ENCODE measurements at regions of chr4 and their contacts with region 1.

Region 1: DNA sequence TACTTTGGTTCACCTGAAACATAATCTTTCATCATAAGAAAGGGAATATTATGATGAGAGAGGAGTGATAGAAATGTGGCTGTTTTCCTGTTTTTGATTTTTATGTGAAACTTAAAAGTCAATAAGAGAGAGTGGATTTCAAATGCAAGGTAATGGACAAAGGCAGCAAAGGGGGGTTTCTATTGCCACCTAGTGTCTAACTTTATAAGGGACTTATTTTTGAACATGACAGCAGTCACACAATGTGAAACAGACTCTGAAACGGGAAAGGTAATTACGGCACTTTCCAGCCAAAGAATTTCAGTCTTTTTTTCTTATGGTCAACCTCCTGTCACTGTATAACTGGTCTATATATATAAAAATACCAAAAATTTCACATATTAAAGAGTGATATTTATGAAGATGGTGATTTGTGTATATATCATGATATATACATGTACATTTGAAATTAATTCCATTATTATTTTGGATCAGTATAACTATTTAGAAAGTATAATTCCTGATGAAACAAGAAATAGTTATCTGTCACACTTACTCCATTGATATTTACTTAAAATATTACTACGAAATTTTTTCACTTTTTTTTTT is 127.1 kb downstream of the FBXO8 start:
- DNase-seq: no peak

Region 2: DNA sequence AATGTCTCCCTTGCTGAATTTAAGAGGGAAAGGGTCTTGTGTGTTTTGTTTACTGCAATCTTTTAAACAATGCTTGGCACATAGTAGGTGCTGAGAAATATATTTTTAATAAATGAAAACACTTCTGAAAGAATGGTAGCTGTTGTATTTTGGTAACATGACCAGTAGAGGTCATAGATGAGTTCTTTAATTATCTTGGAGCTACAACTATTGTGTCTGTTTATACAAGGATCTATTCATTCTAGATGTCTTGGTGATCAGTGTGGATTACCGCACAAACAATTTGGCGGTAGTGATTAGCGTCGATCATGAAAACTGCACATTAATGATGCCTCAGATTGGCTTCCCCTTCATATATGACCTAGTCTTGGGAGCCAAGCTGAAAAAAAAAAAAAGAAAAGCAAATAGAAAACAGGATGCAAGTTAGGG is 736.0 kb before region 1 on chr4:
- intact Hi-C with region 1: loop called (anchors 10 kb)
- DNase-seq: no peak

Region 3: DNA sequence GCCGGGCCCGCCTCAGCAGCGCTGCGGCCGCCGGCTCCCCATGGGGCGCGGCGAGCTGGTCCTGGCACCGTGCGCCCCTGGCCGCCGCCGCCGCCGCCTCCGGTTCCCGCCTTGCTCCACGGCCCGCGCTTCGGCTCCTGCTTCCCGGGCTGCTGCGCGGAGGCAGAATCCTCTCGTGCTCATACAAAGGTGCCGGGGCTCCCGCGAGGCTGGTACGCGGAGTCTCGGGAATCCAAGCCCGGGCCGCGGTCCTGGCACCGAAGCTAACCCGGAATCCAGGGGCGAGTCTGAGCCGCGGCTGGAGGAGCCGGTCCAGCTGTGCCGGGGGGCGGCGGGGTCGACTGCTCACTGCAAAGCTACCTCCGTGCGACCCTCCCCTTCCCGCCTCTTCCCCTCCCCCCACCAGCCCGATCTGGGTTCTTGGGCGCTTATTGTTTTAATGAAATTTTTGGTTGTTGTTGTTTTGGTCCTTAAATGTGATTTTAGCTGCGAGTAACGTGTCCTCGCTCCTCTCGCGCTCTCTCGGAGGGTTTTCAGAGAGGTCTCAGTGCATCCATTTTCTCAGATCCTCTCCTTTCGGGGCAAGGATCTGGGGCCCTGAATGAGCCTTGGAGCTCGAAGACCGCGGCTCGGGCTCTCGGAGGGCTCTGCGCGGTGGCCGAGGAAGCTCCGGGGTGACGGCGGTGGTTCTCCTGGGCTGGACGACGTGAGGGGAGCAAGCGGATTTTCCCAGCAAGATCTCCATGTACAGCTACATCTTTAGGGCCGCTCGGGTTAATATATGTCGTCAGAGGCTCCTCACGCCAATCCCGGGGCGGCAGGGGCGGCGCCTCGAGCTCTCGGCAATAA is 626.6 kb before region 1 on chr4 and contains the start of gene HAND2:
- intact Hi-C with region 1: loop called (anchors 10 kb)
- DNase-seq: peak; percentile 90
- total RNA-seq, gene HAND2: 161 TPM

Region 4: DNA sequence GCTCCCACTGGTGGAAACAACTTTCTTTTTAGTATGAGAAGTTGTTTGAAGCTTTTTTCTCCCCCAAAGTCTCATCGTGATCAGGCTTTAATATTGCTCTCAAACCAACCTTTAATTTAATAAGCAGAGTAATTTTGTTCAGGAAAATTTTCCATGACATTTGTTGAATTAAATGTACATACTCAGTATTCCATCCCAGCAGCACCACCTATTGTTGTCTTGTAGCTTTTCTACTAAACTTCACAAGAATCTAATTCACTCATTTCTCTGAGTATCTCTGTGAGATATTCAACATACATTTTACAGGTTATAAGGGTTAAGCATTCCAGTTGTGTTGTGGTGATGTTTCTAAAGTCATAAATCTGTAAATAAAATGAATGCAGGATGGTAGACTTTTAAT is 408.0 kb before region 1 on chr4:
- intact Hi-C with region 1: loop called (anchors 5 kb)
- DNase-seq: no peak

Region 5: GRCh38 chr4:173990126-173990868 is 166.0 kb before region 1 on chr4:
- intact Hi-C with region 1: loop called (anchors 5 kb)
- DNase-seq: no peak

Region 6: DNA sequence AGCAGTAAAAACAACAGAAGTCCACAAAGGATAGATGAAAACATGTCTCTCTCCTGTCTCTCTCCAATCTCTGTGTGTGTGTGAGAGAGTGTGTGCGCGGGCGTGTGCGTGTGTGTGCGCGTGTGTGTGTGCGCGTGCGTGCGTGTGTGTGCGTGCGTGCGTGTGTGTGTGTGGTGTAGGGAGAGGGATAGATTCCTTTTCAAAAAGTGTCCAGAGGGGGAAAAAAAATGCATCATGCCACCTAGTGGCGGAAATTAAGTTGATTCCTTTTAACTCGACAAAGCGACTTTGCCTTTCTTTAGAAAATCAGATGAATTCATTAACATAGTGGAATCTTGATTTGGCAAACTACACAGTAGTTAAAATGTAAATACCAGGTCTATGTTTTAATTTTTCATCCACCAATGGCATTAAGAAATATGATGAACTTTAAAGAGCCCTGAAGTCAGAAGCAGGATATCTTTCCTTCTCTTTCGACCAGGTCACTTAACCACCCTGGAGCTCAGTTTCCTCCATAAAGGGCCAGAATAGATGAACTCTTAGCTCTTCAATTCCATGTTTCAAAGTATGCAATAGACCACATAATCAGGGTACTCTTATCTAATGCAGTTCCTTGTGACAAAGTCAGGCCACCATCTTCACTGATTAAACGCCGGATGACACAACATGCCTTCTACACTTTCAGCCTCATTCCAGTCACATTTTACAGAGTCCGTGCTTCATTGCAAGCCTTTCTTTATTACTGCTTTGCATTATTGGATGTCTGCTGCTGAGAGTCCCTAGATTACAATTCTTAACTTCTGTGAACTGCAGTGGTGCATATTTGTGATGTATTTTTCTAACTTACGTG is 35.7 kb before region 1 on chr4:
- intact Hi-C with region 1: loop called (anchors 5 kb)
- DNase-seq: no peak

Region 7: GRCh38 chr4:174173360-174173759 is 17.0 kb after region 1 on chr4:
- intact Hi-C with region 1: no loop called
- DNase-seq: no peak

Region 8: DNA sequence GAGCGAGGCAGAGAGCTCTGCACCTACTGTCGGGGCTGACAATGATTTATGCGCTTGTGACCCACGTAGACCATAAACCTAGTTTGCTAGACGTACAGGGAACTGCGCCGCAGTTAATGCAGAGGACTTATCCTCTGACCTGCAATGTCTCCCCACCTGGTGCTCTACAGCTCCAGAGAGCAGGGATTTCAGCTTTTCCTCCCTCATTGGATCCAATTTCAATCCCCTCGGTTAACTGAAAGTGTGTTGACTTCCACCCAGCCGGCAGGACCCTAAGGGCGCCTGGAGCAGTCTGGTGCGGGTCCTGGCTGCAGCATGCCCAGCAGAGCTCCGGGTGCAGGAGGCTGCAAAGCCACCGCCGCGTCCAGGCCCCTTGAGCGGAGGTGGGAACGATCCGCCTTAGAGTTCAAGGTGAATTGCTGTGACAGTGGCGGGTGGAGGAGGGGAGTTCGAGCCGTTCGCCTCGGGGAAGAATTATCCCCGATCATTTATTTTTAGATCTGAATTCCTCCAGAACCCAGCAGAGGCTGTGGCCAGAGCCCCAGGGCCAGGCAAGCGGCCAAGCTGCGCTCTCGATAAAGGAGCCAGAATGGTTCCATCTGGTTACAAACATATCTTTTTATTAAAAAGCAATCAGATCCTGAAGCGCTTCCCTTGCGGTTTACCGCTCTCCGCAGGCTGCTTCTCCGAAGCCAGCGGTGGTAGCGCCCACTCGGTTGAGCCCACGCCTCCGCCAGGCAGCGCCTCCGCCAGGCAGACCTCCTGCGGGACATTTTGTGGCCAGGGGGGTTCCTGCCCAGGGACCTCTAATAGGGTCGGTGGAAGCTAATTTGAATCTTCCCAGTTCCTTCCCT is 61.2 kb after region 1 on chr4:
- intact Hi-C with region 1: loop called (anchors 5 kb)
- DNase-seq: peak; percentile 77